CD8-positive, alpha-beta T cell (primary cell): ENCODE measurements at regions of chr1 and their contacts with region 1.

Region 1: GRCh38 chr1:24970399-24970753 is 40.3 kb upstream of the RUNX3 start:
- DNase-seq: peak in 1 of 9 experiments; percentile 11
- ATAC-seq: no peak
- H3K4me3 ChIP-seq: peak overlapping the region in 1 of 2 experiments; percentile 20
- H3K4me3 Mint-ChIP-seq: peak overlapping the region; percentile 35
- H3K27ac ChIP-seq: peak overlapping the region in 1 of 2 experiments; percentile 23
- H3K27ac Mint-ChIP-seq: peak overlapping the region; percentile 95
- H3K4me1 ChIP-seq: peaks cover 66% of the 10 kb centered on the region
- H3K4me1 Mint-ChIP-seq: peaks cover 65% of the 10 kb centered on the region
- H3K27me3 ChIP-seq: peaks cover 0 to 2% of the 10 kb centered on the region in 2 experiments
- H3K27me3 Mint-ChIP-seq: no peaks in the 10 kb centered on the region
- CTCF ChIP-seq: no peak

Region 2: DNA sequence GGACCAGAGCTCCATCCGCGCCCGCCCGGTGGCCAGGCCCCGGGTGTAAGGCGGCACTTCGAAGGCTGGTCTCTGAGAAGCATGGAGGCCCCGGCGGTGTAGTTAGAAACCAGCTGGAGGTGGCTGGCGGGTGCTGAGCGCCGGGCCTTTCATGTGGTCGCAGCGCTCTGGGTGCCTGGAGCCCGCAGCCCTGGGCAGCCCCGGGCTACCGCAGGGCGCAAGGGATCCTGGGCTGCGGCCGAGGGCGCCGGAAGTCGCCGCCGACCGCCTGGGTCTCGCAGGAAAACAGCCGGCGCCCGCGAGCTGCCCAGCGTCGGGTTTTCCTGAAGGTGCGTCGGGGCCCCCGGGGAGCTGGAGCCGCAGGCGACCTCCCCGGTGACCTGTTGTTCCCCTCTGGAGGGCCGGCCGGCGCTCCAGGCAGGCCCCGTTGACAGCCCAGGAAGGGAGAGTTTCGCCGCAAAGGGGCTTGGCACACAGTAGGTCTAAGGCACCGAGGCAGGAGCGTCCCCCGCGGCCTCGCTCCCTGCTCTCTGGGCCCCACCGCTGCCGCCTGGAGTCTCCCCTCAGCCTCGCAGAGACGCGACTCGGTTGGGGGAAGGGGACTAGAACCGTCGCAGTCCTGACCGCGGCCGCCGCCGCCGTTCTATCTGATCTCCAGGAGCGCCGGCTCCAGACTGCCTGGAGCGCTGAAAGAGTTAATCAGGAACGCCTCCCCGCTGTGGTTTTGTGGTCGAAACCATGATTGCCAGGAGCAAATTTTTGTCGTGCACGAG is 648.5 kb before region 1 on chr1:
- CTCF ChIA-PET with region 1: no interaction called
- POLR2A ChIA-PET with region 1: no interaction called
- intact Hi-C with region 1: no loop called
- DNase-seq: peak; percentile 32 to 86 (median 64)
- ATAC-seq: peak; percentile 70
- H3K4me3 ChIP-seq: peak overlapping the region; percentile 34 to 48
- H3K4me3 Mint-ChIP-seq: peak overlapping the region; percentile 78
- H3K27ac ChIP-seq: no peak overlapping the region
- H3K27ac Mint-ChIP-seq: no peak overlapping the region
- H3K4me1 ChIP-seq: peaks cover 47% of the 10 kb centered on the region
- H3K4me1 Mint-ChIP-seq: peaks cover 46% of the 10 kb centered on the region
- H3K27me3 ChIP-seq: peaks cover 8 to 12% of the 10 kb centered on the region in 2 experiments
- H3K27me3 Mint-ChIP-seq: peaks cover 36% of the 10 kb centered on the region
- CTCF ChIP-seq: no peak

Region 3: DNA sequence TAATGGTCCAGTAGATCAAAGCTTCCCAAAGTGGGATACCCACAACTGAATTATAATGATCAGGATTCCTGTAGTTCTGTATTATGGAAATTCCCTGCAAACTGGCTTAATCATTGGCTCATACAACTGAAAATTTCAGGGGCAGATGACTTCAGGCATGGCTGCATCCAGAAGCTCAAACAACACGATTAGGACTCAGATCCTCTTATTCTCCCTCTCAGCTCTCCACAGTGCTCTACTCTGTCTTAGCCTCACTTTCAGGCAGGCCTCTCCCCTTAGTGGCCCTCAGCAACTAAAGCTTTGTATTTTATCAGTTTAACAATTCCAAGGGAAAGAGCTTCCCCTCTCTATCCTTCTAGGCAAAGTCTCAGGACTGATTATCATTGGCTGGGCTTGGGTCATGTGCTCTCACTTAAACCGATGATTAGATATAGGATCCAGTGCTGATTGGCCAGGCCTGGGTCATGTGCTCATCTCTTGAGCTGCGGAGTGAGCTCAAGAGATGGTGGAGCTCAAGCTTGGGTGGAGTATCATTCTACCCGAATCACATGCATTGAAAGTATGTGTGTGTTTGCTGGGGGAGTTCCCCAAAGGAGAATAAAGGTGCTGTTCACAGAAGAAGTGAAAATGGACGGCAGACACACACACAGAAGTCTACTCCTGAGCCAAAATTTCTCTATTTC is 17.6 kb after region 1 on chr1:
- CTCF ChIA-PET with region 1: interaction called, 16 read pairs
- POLR2A ChIA-PET with region 1: interaction called, 19 read pairs
- intact Hi-C with region 1: loop called in 1 of 2 experiments (anchors 2 kb)
- DNase-seq: peak in 2 of 9 experiments; percentile 33 to 71
- ATAC-seq: peak; percentile 45
- H3K4me3 ChIP-seq: no peak overlapping the region
- H3K4me3 Mint-ChIP-seq: peak overlapping the region; percentile 53
- H3K27ac ChIP-seq: no peak overlapping the region
- H3K27ac Mint-ChIP-seq: peak overlapping the region; percentile 83
- H3K4me1 ChIP-seq: peaks cover 100% of the 10 kb centered on the region
- H3K4me1 Mint-ChIP-seq: peaks cover 97% of the 10 kb centered on the region
- H3K27me3 ChIP-seq: no peaks in the 10 kb centered on the region
- H3K27me3 Mint-ChIP-seq: no peaks in the 10 kb centered on the region
- CTCF ChIP-seq: no peak

Region 4: GRCh38 chr1:25031966-25032667 is 61.7 kb after region 1 on chr1:
- CTCF ChIA-PET with region 1: interaction called, 163 read pairs
- POLR2A ChIA-PET with region 1: interaction called, 55 read pairs
- intact Hi-C with region 1: loop called in 1 of 2 experiments (anchors 1 kb)
- DNase-seq: peak in 8 of 9 experiments; percentile 36 to 94 (median 66)
- ATAC-seq: peak; percentile 60
- H3K4me3 ChIP-seq: no peak overlapping the region
- H3K4me3 Mint-ChIP-seq: peak overlapping the region; percentile 50
- H3K27ac ChIP-seq: peak overlapping the region; percentile 32 to 95
- H3K27ac Mint-ChIP-seq: peak overlapping the region; percentile 97
- H3K4me1 ChIP-seq: peaks cover 99% of the 10 kb centered on the region
- H3K4me1 Mint-ChIP-seq: peaks cover 77% of the 10 kb centered on the region
- H3K27me3 ChIP-seq: no peaks in the 10 kb centered on the region
- H3K27me3 Mint-ChIP-seq: no peaks in the 10 kb centered on the region
- CTCF ChIP-seq: peak; percentile 42

Region 5: GRCh38 chr1:25247024-25247828 is 276.9 kb after region 1 on chr1 and contains the start of gene RSRP1:
- CTCF ChIA-PET with region 1: no interaction called
- POLR2A ChIA-PET with region 1: no interaction called
- intact Hi-C with region 1: no loop called
- DNase-seq: peak; percentile 99 to 100 (median 100)
- ATAC-seq: peak; percentile 86
- H3K4me3 ChIP-seq: peak within 1 kb of the TSS; percentile 82
- H3K4me3 Mint-ChIP-seq: peak within 1 kb of the TSS; percentile 96
- H3K27ac ChIP-seq: peak within 1 kb of the TSS; percentile 97 to 99
- H3K27ac Mint-ChIP-seq: peak within 1 kb of the TSS; percentile 99
- H3K4me1 ChIP-seq: peaks cover 45% of the 10 kb centered on the region
- H3K4me1 Mint-ChIP-seq: peaks cover 43% of the 10 kb centered on the region
- H3K27me3 ChIP-seq: no peaks in the 10 kb centered on the region
- H3K27me3 Mint-ChIP-seq: no peaks in the 10 kb centered on the region
- CTCF ChIP-seq: no peak
- total RNA-seq, gene RSRP1: 472 to 482 TPM